K562 (cell line): ENCODE measurements at regions of chr17 and their contacts with region 1.

Region 1: DNA sequence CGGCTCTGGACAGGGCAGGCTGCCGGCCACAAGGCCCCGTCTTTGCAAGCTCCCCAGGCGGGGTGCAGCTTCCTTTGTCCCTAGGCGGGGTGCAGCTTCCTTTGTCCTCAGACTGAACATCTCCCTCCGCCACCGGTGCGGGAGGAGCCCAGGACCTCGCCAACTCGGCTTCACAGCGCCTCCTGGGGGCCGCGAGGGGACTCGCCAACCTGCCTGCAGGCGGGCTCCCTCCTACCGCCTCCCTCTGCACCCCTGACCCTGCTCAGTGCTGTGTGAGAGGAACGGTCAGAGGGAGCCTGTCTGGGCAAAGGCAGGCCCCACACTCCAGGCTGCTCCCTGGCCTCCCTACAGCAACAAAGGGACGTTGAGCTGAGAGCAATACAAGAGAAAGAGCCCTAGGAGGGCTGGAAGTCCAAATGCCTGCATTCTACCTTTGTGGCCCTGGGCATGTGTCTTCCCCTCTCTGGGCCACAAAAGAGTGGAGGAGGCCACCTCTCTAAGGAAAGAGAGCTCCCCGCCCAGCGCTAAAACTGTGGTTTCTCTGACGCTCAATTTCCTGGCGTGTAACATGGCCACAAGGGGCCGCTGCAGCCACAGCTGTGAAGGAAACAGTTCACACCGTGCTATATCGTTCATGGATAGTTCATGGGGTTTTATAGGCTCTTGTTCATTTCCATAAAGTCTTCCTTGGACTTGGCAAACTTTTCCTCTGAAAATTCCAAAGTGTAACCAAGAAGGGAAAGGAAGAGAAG is 20.9 kb upstream of the KRT19 start:
- DNase-seq: peak; percentile 91 to 92 (median 91)
- ATAC-seq: peak; percentile 97
- H3K4me3 ChIP-seq: no peak overlapping the region
- H3K27ac ChIP-seq: peak overlapping the region; percentile 56; the same call in 2 of the 3 replicates
- H3K4me1 ChIP-seq: peaks cover 31 to 34% of the 10 kb centered on the region in 2 experiments
- H3K27me3 ChIP-seq: peaks cover 0 to 4% of the 10 kb centered on the region in 2 experiments; a peak in 1 of 5 replicates
- CTCF ChIP-seq: peak; percentile 93 to 95 (median 95); a peak in 5 of 6 replicates
- EP300 ChIP-seq: no peak
- POLR2A ChIP-seq: no peak
- RAD21 ChIP-seq: peak; percentile 89 to 95

Region 2: DNA sequence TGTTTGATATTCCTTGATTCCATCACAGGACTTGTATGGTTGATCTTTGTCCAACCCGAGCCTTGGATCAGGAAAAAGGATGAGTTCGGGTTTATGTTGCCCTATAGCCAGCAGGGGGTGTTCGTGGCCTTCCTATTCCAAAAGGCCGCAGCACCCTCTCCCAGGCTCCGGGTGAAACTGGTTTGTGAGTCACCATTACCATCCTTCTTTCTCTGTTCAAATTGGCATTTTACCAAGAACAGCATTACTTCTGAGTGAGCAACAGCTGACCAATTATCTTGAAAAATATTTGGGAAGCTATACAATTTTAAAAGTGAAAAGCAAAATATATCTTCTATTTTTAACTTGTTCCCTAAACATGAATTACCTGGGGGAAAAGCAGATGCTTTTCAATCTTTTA is 639.7 kb before region 1 on chr17:
- CTCF ChIA-PET with region 1: interaction called, 22 read pairs
- POLR2A ChIA-PET with region 1: no interaction called
- in situ Hi-C with region 1: no loop called
- intact Hi-C with region 1: loop called (anchors 1 kb)
- DNase-seq: peak; percentile 73 to 83 (median 75)
- ATAC-seq: peak; percentile 96
- H3K4me3 ChIP-seq: no peak overlapping the region
- H3K27ac ChIP-seq: no peak overlapping the region
- H3K4me1 ChIP-seq: no peaks in the 10 kb centered on the region
- H3K27me3 ChIP-seq: peaks cover 32 to 37% of the 10 kb centered on the region in 2 experiments
- CTCF ChIP-seq: peak; percentile 83 to 92 (median 87)
- EP300 ChIP-seq: no peak
- POLR2A ChIP-seq: no peak
- RAD21 ChIP-seq: peak; percentile 92 to 93

Region 3: DNA sequence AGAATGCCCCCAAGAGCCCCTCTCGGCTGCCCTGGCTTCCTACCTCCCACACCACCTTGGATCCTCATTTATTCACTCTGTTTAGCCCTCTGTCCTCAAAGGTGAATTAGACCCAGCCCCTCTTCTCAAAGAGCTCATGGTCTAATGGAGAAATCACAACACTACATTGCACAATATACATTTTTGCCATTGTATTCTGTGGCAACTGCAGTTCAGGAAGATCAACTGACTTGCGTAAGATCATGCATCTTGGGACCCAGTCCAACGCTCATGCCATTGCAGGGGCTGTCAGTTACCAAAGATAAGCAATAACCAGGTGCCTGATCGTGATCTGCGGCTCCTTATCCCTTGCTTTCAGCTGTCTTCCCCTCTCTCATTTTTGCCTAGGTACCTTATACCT is 109.6 kb before region 1 on chr17:
- CTCF ChIA-PET with region 1: no interaction called
- POLR2A ChIA-PET with region 1: no interaction called
- in situ Hi-C with region 1: no loop called
- intact Hi-C with region 1: no loop called
- DNase-seq: no peak
- ATAC-seq: no peak
- H3K4me3 ChIP-seq: no peak overlapping the region
- H3K27ac ChIP-seq: no peak overlapping the region
- H3K4me1 ChIP-seq: no peaks in the 10 kb centered on the region
- H3K27me3 ChIP-seq: peaks cover 4 to 40% of the 10 kb centered on the region in 2 experiments; a peak in 4 of 5 replicates
- CTCF ChIP-seq: no peak
- EP300 ChIP-seq: no peak
- POLR2A ChIP-seq: no peak
- RAD21 ChIP-seq: no peak

Region 4: GRCh38 chr17:41455236-41455635 is 93.8 kb before region 1 on chr17:
- CTCF ChIA-PET with region 1: no interaction called
- POLR2A ChIA-PET with region 1: no interaction called
- in situ Hi-C with region 1: no loop called
- intact Hi-C with region 1: no loop called
- DNase-seq: no peak
- ATAC-seq: no peak
- H3K4me3 ChIP-seq: no peak overlapping the region
- H3K27ac ChIP-seq: no peak overlapping the region
- H3K4me1 ChIP-seq: no peaks in the 10 kb centered on the region; a peak in 1 of 5 replicates
- H3K27me3 ChIP-seq: peaks cover 0 to 5% of the 10 kb centered on the region in 2 experiments; a peak in 2 of 5 replicates
- CTCF ChIP-seq: no peak
- EP300 ChIP-seq: no peak
- POLR2A ChIP-seq: no peak
- RAD21 ChIP-seq: no peak

Region 5: GRCh38 chr17:41496820-41497408 is 52.1 kb before region 1 on chr17:
- CTCF ChIA-PET with region 1: interaction called, 3 read pairs
- POLR2A ChIA-PET with region 1: interaction called, 3 read pairs
- in situ Hi-C with region 1: no loop called
- intact Hi-C with region 1: loop called (anchors 1 kb)
- DNase-seq: peak; percentile 88 to 91 (median 90)
- ATAC-seq: peak; percentile 92
- H3K4me3 ChIP-seq: no peak overlapping the region
- H3K27ac ChIP-seq: no peak overlapping the region
- H3K4me1 ChIP-seq: peaks cover 48 to 53% of the 10 kb centered on the region in 2 experiments
- H3K27me3 ChIP-seq: no peaks in the 10 kb centered on the region
- CTCF ChIP-seq: peak; percentile 88 to 99 (median 97)
- EP300 ChIP-seq: no peak
- POLR2A ChIP-seq: no peak; the same call in 1 of the 2 replicates
- RAD21 ChIP-seq: peak; percentile 67 to 86

Region 6: DNA sequence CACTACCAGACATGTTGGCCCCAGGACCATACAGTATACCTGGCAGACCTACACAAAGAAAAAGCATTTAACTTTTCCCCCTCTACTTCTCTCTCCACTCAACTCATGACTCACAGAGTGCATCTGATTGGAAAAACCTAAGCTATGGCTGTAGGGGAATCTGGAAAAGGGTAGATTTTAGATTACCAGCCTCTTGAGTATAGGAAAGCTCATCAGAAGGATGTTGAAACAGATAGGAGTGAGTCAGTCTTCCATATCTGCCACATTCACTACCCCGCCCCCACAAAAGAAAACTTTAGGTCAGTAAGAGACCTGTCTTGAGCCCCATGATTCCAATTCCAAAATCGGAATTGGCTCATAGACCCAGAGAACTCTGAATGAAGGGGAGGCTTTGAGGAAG is 10.5 kb after region 1 on chr17:
- CTCF ChIA-PET with region 1: no interaction called
- POLR2A ChIA-PET with region 1: interaction called, 12 read pairs
- in situ Hi-C with region 1: no loop called
- intact Hi-C with region 1: no loop called
- DNase-seq: peak in 1 of 4 experiments; percentile 41
- ATAC-seq: no peak
- H3K4me3 ChIP-seq: no peak overlapping the region
- H3K27ac ChIP-seq: no peak overlapping the region
- H3K4me1 ChIP-seq: no peaks in the 10 kb centered on the region; a peak in 1 of 5 replicates
- H3K27me3 ChIP-seq: peaks cover 33 to 44% of the 10 kb centered on the region in 2 experiments
- CTCF ChIP-seq: no peak
- EP300 ChIP-seq: peak; percentile 24; the same call in 1 of the 2 replicates
- POLR2A ChIP-seq: no peak
- RAD21 ChIP-seq: no peak

Region 7: DNA sequence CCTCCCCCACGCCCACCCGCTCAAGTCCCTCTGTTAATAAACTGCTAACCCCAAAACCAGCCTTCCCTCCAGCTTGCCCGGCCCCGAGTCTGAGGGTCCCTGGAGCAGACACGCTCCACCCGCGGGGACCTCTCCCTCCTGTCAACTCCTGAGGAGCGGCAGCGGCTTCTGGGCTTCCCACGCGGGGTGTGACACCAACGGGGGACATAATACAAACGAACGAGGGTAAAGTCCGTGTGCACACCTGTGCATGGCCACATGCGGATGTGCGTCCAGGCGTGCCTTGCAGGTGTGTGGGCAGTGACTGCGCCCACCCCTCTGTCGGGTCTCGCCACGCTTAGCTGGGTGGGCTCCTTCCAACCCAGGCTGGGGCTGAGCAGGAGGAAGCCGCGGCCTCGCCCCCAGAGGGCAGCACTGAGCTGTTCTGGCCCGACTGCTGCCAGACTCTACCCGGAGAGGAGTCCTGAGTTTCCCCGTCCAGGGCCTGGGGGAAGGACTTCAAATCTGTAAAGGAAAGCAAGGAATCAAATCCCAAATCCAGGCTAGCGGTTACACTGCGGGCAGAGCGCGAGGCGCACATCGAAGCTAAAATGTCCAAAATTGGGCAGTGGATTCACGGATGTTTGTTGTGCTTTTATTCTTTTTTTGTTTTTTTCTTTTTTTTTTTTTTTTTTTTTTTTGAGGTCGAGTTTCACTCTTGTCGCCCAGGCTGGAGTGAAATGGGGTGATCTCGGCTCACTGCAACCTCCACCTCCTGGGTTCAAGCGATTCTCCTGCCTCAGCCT is 99.6 kb after region 1 on chr17:
- CTCF ChIA-PET with region 1: interaction called, 80 read pairs
- POLR2A ChIA-PET with region 1: interaction called, 3 read pairs
- in situ Hi-C with region 1: loop called (anchors 5 kb)
- intact Hi-C with region 1: loop called (anchors 1 kb)
- DNase-seq: peak; percentile 86 to 89 (median 86)
- ATAC-seq: peak; percentile 96
- H3K4me3 ChIP-seq: peak overlapping the region; percentile 23
- H3K27ac ChIP-seq: no peak overlapping the region; the same call in 2 of the 3 replicates
- H3K4me1 ChIP-seq: peaks cover 20 to 31% of the 10 kb centered on the region in 2 experiments; a peak in 4 of 5 replicates
- H3K27me3 ChIP-seq: peaks cover 0 to 4% of the 10 kb centered on the region in 2 experiments; a peak in 1 of 5 replicates
- CTCF ChIP-seq: peak; percentile 85 to 95 (median 93)
- EP300 ChIP-seq: no peak
- POLR2A ChIP-seq: no peak
- RAD21 ChIP-seq: peak; percentile 39 to 71